ENCODE measurements at regions of chr16 and their contacts with region 1.

Region 1: GRCh38 chr16:75110637-75111513 is 5.7 kb downstream of the LDHD start:
- DNase-seq: peak; percentile 73
- ATAC-seq: peak; percentile 90
- H3K4me3 Mint-ChIP-seq: peak overlapping the region; percentile 54
- H3K27ac Mint-ChIP-seq: peak overlapping the region; percentile 30
- H3K4me1 Mint-ChIP-seq: peaks cover 41% of the 10 kb centered on the region
- H3K27me3 Mint-ChIP-seq: peaks cover 57% of the 10 kb centered on the region
- CTCF ChIP-seq: no peak

Region 2: DNA sequence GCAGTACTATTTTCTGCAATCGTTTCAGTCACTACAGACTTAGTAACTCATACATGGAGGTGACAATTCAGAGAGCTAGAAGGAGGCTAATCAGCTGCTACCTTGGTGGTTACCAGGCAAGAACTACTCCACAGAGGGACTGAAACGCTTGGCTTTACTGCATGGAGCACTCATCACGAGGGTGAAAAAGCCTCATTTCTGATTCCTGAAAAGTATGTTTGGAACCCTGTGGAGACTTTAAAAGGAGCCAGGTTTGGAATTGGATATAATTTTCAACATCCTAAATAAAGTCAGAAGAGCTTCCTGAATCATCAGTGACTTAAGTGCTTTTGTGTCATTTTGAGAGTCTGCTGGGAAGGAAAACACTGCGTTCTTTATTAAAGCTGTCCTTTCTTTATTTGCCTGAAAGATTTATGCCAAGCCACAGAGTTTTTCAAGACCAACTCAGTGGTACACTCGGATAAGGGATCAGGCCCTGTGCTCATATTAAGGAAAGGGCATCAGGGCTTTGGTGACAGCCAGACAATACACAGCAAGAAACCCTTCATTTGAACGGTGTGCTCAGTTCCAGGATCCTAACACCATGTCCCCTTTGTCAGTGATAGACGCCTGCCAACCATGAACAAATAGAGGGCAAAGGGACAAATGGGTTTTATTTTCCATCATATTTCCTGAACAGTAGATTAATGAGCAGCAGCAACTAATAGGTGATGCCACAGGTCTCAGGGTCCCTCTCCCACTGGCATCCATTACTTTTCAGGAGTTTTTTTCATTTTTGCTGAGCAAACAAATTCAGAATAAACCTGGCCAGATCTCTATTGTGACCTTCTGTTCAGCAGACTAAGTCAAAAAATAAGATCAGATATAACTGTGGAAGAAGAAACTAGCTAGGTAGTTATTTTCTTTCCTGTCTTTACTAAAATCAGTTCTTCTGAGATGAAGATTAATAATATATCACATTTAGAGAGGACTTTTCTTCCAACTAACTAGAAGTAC is 609.1 kb before region 1 on chr16:
- CTCF ChIA-PET with region 1: no interaction called
- POLR2A ChIA-PET with region 1: no interaction called
- intact Hi-C with region 1: no loop called
- DNase-seq: no peak
- ATAC-seq: no peak
- H3K4me3 Mint-ChIP-seq: no peak overlapping the region
- H3K27ac Mint-ChIP-seq: no peak overlapping the region
- H3K4me1 Mint-ChIP-seq: no peaks in the 10 kb centered on the region
- H3K27me3 Mint-ChIP-seq: no peaks in the 10 kb centered on the region
- CTCF ChIP-seq: no peak

Region 3: DNA sequence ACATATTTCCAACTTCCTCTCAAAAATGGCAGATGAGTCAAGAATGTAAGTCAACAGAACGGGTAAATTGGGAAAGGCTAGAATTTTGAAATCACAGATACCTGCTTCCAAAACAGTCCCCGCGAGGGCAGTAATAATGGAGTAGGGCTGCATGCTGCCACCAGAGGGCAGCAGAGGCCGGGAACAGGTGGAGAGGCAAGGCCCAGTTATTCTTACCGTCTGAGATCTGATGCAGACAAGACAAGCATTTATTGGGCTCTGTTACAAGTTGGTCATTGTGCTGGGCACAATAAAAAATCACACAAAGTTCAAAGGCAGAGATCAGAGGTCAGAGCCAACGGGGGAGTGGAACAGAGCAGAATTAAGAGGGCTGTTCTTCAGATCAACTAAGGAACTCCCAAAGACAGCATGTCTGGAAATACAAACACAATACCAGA is 401.4 kb before region 1 on chr16:
- CTCF ChIA-PET with region 1: no interaction called
- POLR2A ChIA-PET with region 1: no interaction called
- intact Hi-C with region 1: loop called (anchors 1 kb)
- DNase-seq: peak; percentile 69
- ATAC-seq: peak; percentile 98
- H3K4me3 Mint-ChIP-seq: no peak overlapping the region
- H3K27ac Mint-ChIP-seq: no peak overlapping the region
- H3K4me1 Mint-ChIP-seq: peaks cover 3% of the 10 kb centered on the region
- H3K27me3 Mint-ChIP-seq: no peaks in the 10 kb centered on the region
- CTCF ChIP-seq: peak; percentile 88

Region 4: DNA sequence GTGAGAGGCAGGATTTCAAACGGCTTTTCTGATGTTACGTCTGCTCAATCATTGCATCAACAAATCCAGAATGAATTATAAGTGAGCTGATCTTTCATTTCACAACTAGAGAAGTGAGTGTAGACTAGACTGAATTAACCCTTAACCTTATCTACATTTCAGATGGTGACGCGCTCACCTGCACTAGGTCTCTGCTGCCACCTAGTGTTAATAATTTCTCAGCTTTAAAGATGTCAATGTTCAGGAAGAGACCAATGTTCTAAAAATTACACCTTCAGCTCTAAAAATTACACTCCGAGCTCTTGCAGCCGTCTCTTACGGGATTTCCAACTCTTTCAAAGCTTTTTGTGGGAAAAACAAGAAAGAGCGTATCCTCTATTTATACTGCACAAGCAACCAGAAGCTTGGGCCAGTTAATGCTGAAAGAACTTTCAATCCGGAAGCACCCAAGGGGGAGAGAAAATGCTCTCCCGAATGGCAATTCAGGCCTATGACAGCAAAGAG is 248.1 kb before region 1 on chr16:
- CTCF ChIA-PET with region 1: interaction called, 11 read pairs
- POLR2A ChIA-PET with region 1: no interaction called
- intact Hi-C with region 1: no loop called
- DNase-seq: no peak
- ATAC-seq: peak; percentile 28
- H3K4me3 Mint-ChIP-seq: no peak overlapping the region
- H3K27ac Mint-ChIP-seq: no peak overlapping the region
- H3K4me1 Mint-ChIP-seq: no peaks in the 10 kb centered on the region
- H3K27me3 Mint-ChIP-seq: no peaks in the 10 kb centered on the region
- CTCF ChIP-seq: peak; percentile 60

Region 5: DNA sequence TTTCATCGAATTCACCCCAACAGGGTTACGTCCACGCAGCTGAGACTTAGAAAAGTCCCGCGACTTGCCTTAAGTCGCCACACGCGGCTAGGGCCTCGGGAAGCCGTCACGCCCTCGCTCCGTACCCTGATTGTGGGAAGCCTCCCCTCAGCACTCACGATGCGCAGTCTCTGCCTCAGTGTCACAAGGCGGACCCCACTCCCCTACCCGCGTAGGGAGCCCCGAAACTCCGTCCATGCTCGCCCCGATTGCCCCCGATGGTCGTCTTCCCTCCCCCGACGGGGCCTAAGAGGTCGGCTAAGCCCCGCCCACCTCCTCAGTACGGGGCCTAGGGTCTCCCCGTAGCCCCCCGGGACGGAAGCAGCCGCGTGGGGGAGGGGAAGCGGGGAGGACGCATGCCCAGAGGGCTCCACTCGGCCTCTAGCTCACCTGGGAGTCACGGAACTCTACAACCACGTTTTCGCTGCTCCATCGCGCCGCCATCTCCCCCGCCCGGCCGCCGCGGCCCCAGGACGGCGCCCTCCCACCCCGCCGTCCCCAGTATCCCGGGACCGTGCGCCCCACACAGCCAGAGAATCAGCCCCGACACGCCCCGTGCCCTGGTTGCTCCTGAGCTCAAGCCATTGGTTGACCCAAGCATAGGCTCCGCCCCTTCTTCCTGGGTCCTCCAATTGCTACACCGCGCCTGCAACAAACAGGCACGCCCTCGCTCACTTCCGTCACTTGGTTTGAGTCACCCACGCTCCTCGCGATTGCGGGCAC is 126.2 kb before region 1 on chr16 and contains the start of gene WDR59:
- CTCF ChIA-PET with region 1: interaction called, 11 read pairs
- POLR2A ChIA-PET with region 1: interaction called, 5 read pairs
- intact Hi-C with region 1: no loop called
- DNase-seq: peak; percentile 90
- ATAC-seq: peak; percentile 99
- H3K4me3 Mint-ChIP-seq: peak within 1 kb of the TSS; percentile 96
- H3K27ac Mint-ChIP-seq: peak within 1 kb of the TSS; percentile 88
- H3K4me1 Mint-ChIP-seq: peaks cover 20% of the 10 kb centered on the region
- H3K27me3 Mint-ChIP-seq: no peaks in the 10 kb centered on the region
- CTCF ChIP-seq: no peak
- total RNA-seq, gene WDR59: 80.8 and 93.3 TPM in 2 replicates

Region 6: GRCh38 chr16:75011634-75012307 is 99.1 kb before region 1 on chr16:
- CTCF ChIA-PET with region 1: interaction called, 5 read pairs
- POLR2A ChIA-PET with region 1: interaction called, 7 read pairs
- intact Hi-C with region 1: loop called (anchors 1 kb)
- DNase-seq: no peak
- ATAC-seq: peak; percentile 98
- H3K4me3 Mint-ChIP-seq: peak overlapping the region; percentile 62
- H3K27ac Mint-ChIP-seq: peak overlapping the region; percentile 74
- H3K4me1 Mint-ChIP-seq: peaks cover 18% of the 10 kb centered on the region
- H3K27me3 Mint-ChIP-seq: no peaks in the 10 kb centered on the region
- CTCF ChIP-seq: no peak

Region 7: DNA sequence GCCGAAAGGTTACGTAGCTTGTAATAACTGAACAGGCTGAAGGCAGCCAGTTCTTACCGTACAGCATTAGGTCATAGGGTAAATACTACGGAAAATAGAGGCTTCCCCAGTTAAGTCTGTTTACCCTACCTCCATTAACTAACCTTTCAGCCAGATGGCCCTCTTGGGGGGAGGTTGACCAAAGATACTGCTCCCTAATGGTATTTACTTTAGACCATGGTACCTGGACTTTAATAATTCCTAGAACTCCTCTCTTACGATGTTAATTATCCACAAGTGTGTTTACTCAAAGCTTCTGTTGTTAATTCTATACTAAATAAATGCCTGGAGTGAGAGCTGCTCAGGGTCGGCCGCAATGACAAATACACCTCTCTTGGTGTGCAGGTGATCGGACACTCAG is 522.0 kb after region 1 on chr16:
- CTCF ChIA-PET with region 1: no interaction called
- POLR2A ChIA-PET with region 1: interaction called, 12 read pairs
- intact Hi-C with region 1: no loop called
- DNase-seq: no peak
- ATAC-seq: no peak
- H3K4me3 Mint-ChIP-seq: no peak overlapping the region
- H3K27ac Mint-ChIP-seq: no peak overlapping the region
- H3K4me1 Mint-ChIP-seq: no peaks in the 10 kb centered on the region
- H3K27me3 Mint-ChIP-seq: no peaks in the 10 kb centered on the region
- CTCF ChIP-seq: no peak

Measured in activated B cell treated with CpG ODN at 0.5 μM for 24 hours (primary cell).